ENCODE measurements at regions of chr6 and their contacts with region 1.

Region 1: GRCh38 chr6:79570129-79571029 is 33.1 kb upstream of the LCA5 start:
- DNase-seq: no peak
- H3K4me3 ChIP-seq: peak overlapping the region; percentile 11 to 51 (median 38)
- H3K27ac ChIP-seq: no peak overlapping the region
- H3K4me1 ChIP-seq: peaks cover 7 to 12% (median 10%) of the 10 kb centered on the region in 4 donors
- H3K27me3 ChIP-seq: no peaks in the 10 kb centered on the region
- CTCF ChIP-seq: peak; percentile 60 to 71 (median 61)
- EP300 ChIP-seq: no peak
- POLR2A ChIP-seq: no peak

Region 2: DNA sequence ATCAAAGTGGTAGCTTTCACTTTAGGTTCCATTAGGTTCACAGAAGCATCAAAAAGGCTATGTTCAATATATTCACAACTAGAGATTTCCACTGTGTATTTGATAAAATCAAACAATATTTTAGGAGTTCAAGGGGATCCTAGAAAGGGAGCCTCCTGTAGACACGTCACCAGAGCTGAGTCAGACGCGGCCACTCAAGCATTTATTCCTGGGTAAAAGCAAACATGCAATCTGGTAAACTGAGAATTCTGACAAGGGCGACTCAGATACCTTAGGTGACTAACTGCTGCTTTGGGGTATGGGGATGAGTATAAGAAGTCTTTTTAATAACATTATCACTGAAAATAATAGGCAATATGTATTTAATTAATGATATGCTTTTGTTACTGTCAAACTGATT is 217.2 kb before region 1 on chr6:
- intact Hi-C with region 1: no loop called
- DNase-seq: no peak
- H3K4me3 ChIP-seq: no peak overlapping the region
- H3K27ac ChIP-seq: no peak overlapping the region
- H3K4me1 ChIP-seq: no peaks in the 10 kb centered on the region
- H3K27me3 ChIP-seq: no peaks in the 10 kb centered on the region
- CTCF ChIP-seq: no peak
- EP300 ChIP-seq: no peak
- POLR2A ChIP-seq: no peak

Region 3: DNA sequence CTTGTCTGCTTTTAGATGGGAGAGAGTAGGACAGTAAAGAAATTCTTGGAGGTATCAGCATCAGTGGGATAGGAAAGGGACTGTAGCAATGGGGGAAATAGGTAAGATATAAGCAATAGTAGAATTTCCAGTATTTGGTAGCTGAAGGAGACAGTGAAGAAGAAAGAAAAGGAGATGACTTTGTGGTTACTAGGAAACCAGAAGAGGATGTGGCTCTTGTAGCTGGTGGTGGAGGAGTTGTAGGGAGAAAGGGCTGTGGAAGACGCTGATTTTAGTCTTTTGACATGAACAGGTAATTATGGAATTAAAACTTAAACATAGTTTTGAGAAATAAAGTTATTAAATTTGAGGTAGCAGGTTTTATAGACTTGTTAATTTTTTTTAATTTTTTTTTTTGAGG is 86.9 kb after region 1 on chr6:
- intact Hi-C with region 1: no loop called
- DNase-seq: no peak
- H3K4me3 ChIP-seq: no peak overlapping the region
- H3K27ac ChIP-seq: no peak overlapping the region
- H3K4me1 ChIP-seq: peaks cover 0 to 5% (median 0%) of the 10 kb centered on the region in 4 donors
- H3K27me3 ChIP-seq: no peaks in the 10 kb centered on the region
- CTCF ChIP-seq: no peak
- EP300 ChIP-seq: no peak
- POLR2A ChIP-seq: no peak

Region 4: GRCh38 chr6:79672631-79673111 is 102.3 kb after region 1 on chr6:
- intact Hi-C with region 1: loop called (anchors 5 kb)
- DNase-seq: no peak
- H3K4me3 ChIP-seq: no peak overlapping the region
- H3K27ac ChIP-seq: peak overlapping the region in 1 of 4 donors; percentile 29
- H3K4me1 ChIP-seq: peaks cover 8 to 32% (median 30%) of the 10 kb centered on the region in 4 donors
- H3K27me3 ChIP-seq: no peaks in the 10 kb centered on the region
- CTCF ChIP-seq: peak; percentile 10 to 42 (median 34)
- EP300 ChIP-seq: no peak
- POLR2A ChIP-seq: no peak

Region 5: DNA sequence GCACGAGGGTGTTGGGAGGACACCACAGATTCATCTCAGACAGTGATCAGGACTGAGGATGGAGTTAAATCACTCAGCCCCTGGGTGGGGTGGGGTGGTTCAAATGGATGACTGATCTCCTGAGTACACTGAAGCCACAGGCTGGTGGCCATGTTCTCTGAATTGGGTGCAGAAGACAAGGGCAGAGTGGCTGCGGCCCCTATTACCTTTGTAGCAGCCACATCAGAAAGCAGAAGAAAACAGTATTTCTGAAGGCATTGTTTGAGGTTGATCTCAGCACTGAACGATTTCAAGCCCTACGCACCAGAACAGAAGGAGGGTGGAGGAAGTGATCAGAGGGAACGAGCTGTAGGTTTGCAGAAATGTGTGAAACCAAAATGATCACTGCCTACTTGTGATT is 132.3 kb after region 1 on chr6:
- intact Hi-C with region 1: loop called (anchors 10 kb)
- DNase-seq: no peak
- H3K4me3 ChIP-seq: no peak overlapping the region
- H3K27ac ChIP-seq: no peak overlapping the region
- H3K4me1 ChIP-seq: no peaks in the 10 kb centered on the region
- H3K27me3 ChIP-seq: no peaks in the 10 kb centered on the region
- CTCF ChIP-seq: no peak
- EP300 ChIP-seq: no peak
- POLR2A ChIP-seq: no peak

Region 6: DNA sequence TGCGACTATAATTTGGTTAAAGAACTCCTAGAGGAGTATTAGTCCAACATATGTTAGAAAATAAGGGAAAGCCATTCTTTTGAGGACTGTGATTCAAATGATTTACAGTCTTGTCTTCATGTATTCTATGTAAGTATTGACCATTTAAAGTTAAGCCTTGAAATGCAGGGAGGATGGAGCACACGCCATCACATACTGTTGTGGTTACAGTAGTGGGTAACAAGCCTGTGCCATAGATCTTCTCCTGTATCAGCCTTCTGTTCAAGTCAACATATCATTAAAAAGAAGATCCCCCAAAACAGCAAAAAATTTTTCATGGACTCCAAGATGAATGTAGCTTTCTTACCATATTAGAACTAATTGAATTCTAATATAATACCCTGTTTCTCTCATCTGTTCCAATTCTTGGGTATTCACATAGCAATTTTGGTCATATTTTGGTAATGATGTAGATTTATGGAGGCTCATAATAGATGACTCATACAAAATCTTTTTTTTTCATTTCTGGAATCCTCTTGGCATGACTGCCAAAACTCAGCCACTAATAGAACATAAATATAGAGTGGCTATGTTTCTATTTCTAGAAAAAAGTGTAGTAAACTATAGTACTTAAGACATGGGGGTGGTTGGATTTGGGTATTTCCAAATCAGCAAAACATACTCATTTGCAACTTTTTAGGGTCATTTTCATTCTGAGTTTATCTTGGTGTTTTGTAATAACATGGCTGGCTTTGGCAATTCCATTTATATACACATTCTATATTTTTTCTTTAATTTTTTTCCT is 949.6 kb after region 1 on chr6:
- intact Hi-C with region 1: no loop called
- DNase-seq: no peak
- H3K4me3 ChIP-seq: no peak overlapping the region
- H3K27ac ChIP-seq: no peak overlapping the region
- H3K4me1 ChIP-seq: peaks cover 14 to 41% (median 33%) of the 10 kb centered on the region in 4 donors
- H3K27me3 ChIP-seq: no peaks in the 10 kb centered on the region
- CTCF ChIP-seq: no peak
- EP300 ChIP-seq: no peak
- POLR2A ChIP-seq: no peak

Measured in esophagus muscularis mucosa (tissue), 4 donors.